ENCODE measurements at regions of chr17 and their contacts with region 1.

Region 1: DNA sequence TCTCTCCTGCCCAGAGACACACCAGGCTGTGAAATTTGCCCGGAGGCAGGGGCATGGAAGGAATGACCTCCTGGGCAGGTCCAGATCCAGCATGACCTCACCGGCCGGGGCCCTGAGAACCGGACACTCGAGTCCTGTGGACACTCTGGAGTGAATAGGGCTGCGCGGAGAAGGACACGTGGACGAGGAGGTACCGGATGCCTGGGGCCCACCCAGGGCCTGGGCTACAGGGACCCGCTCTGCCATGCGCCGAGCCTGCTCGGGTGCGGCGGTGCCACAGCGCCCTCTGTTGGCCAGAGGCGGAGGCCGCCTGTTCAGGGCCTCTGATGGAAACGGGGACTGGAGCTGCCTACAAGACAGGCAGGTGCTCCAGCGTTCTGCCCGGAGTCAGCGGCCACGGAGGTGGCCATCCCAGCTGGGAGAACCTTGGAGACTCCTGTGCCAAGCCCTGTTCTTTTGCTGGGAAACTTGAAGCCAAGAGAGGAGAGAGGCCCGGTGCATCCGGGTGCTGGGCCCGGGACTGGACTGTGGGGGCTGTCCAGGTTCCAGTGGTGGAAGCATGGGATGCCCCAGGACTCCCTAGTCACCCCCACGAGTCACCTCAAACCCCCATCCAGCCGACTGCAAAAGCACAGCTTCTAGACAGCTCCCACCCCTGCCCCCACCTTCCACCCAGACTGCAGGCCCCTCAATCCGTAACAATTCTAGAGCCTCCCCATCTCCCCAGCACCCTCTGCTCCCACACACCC is 19.3 kb upstream of the NXPH3 start:
- DNase-seq: peak; percentile 84

Region 2: GRCh38 chr17:49315551-49316257 is 240.7 kb before region 1 on chr17:
- intact Hi-C with region 1: loop called (anchors 5 kb)
- DNase-seq: peak; percentile 78

Region 3: DNA sequence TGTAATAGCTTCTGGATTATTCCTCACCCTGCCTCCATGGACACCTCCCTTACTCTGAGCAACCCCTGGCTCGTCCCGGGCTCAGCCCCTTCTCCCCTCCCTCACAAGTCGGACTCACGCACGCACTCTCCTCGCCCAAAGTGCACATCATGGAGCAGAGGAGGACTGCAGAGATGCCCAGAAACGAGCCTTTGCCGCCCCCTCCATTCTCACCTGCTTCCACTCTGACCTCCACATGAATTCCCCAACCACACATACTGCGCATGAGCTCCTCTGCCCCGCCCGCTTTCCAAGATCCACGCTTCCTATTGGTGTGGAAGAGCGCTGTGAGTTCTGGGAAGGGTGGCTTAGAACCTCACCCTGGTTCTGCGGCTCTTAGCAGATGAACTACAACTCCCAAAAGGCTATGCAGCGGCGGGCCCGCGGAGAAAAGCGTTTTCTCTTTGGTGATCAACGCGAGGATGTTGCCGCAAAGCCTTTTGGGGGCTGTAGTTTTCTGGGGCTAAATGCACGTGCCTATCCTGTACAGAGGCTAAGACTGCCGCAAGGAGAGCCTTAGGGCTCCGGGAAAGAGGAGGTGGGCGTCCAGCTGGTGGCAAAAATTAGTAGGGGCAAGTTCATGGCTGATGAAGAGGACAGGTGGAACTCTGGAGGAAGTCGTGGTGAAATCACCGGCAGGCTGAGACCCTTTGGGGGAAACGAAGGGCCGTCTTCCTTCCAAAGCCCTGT is 141.6 kb before region 1 on chr17 and contains the start of gene PHB1:
- intact Hi-C with region 1: loop called (anchors 2 kb)
- DNase-seq: peak; percentile 97
- total RNA-seq, gene PHB1: 161 TPM

Region 4: GRCh38 chr17:49434821-49435670 is 121.4 kb before region 1 on chr17:
- intact Hi-C with region 1: loop called (anchors 2 kb)
- DNase-seq: no peak

Region 5: GRCh38 chr17:49496183-49496866 is 60.1 kb before region 1 on chr17:
- intact Hi-C with region 1: loop called (anchors 2 kb)
- DNase-seq: peak; percentile 86